Activated CD4-positive, alpha-beta memory T cell treated with anti-CD3 and anti-CD28 coated beads, Interleukin-2, amount 10 ng/mL, durations not matched to agents 7 days and 5 days (primary cell): ENCODE measurements at regions of chr13 and their contacts with region 1.

Region 1: GRCh38 chr13:101757446-101758039 is 305.1 kb downstream of the ITGBL1 start:
- DNase-seq: no peak
- H3K4me3 Mint-ChIP-seq: no peak overlapping the region
- H3K27ac Mint-ChIP-seq: no peak overlapping the region
- H3K4me1 Mint-ChIP-seq: no peaks in the 10 kb centered on the region
- H3K27me3 Mint-ChIP-seq: peaks cover 9% of the 10 kb centered on the region

Region 2: GRCh38 chr13:101144808-101145419 is 612.6 kb before region 1 on chr13:
- CTCF ChIA-PET with region 1: interaction called, 16 read pairs
- POLR2A ChIA-PET with region 1: no interaction called
- DNase-seq: no peak
- H3K4me3 Mint-ChIP-seq: no peak overlapping the region
- H3K27ac Mint-ChIP-seq: no peak overlapping the region
- H3K4me1 Mint-ChIP-seq: no peaks in the 10 kb centered on the region
- H3K27me3 Mint-ChIP-seq: peaks cover 29% of the 10 kb centered on the region

Region 3: GRCh38 chr13:101514788-101515187 is 242.8 kb before region 1 on chr13:
- CTCF ChIA-PET with region 1: interaction called, 17 read pairs
- POLR2A ChIA-PET with region 1: no interaction called
- DNase-seq: no peak
- H3K4me3 Mint-ChIP-seq: no peak overlapping the region
- H3K27ac Mint-ChIP-seq: no peak overlapping the region
- H3K4me1 Mint-ChIP-seq: peaks cover 11% of the 10 kb centered on the region
- H3K27me3 Mint-ChIP-seq: peaks cover 5% of the 10 kb centered on the region